ENCODE measurements at regions of chr3 and their contacts with region 1.

Region 1: GRCh38 chr3:78645628-78646310 is 1122.0 kb downstream of the ROBO1 start:
- DNase-seq: peak; percentile 84
- H3K4me3 ChIP-seq: no peak overlapping the region
- H3K27ac ChIP-seq: no peak overlapping the region
- H3K4me1 ChIP-seq: peaks cover 31% of the 10 kb centered on the region
- H3K27me3 ChIP-seq: no peaks in the 10 kb centered on the region
- CTCF ChIP-seq: peak; percentile 54 to 61
- POLR2A ChIP-seq: no peak

Region 2: GRCh38 chr3:77254967-77255831 is 1390.6 kb before region 1 on chr3:
- CTCF ChIA-PET with region 1: interaction called, 3 read pairs
- POLR2A ChIA-PET with region 1: no interaction called
- dilution Hi-C with region 1: no loop called
- intact Hi-C with region 1: loop called (anchors 5 kb)
- DNase-seq: peak; percentile 26
- H3K4me3 ChIP-seq: no peak overlapping the region
- H3K27ac ChIP-seq: no peak overlapping the region
- H3K4me1 ChIP-seq: no peaks in the 10 kb centered on the region
- H3K27me3 ChIP-seq: no peaks in the 10 kb centered on the region
- CTCF ChIP-seq: peak; percentile 44 to 47
- POLR2A ChIP-seq: no peak

Region 3: GRCh38 chr3:77348231-77348855 is 1297.4 kb before region 1 on chr3:
- CTCF ChIA-PET with region 1: interaction called, 89 read pairs
- POLR2A ChIA-PET with region 1: no interaction called
- dilution Hi-C with region 1: no loop called
- intact Hi-C with region 1: loop called (anchors 1 kb)
- DNase-seq: peak; percentile 9
- H3K4me3 ChIP-seq: no peak overlapping the region
- H3K27ac ChIP-seq: no peak overlapping the region
- H3K4me1 ChIP-seq: no peaks in the 10 kb centered on the region
- H3K27me3 ChIP-seq: no peaks in the 10 kb centered on the region
- CTCF ChIP-seq: peak; percentile 25 to 27
- POLR2A ChIP-seq: no peak

Region 4: DNA sequence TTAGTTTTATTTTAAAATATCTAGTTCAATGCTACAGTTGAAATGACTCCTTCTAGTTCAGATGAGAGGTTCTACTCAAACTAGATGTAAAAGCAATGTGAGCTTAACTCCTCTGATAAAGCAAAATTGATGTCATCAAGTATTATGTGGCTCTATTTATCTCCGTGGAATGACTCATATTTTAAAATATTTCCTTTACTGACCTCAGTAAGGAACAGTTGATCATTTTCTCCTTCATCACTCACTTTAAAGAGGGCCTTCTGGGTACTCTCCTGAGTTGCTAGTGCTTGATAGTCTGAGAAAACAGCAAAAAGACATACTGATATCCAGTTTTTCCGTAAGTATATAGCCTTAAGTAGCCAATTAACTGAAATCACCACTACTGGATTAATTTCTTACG is 506.6 kb before region 1 on chr3:
- CTCF ChIA-PET with region 1: interaction called, 14 read pairs
- POLR2A ChIA-PET with region 1: no interaction called
- dilution Hi-C with region 1: no loop called
- intact Hi-C with region 1: loop called (anchors 2 kb)
- DNase-seq: peak; percentile 71
- H3K4me3 ChIP-seq: no peak overlapping the region
- H3K27ac ChIP-seq: peak overlapping the region; percentile 67
- H3K4me1 ChIP-seq: peaks cover 53% of the 10 kb centered on the region
- H3K27me3 ChIP-seq: no peaks in the 10 kb centered on the region
- CTCF ChIP-seq: no peak
- POLR2A ChIP-seq: no peak

Region 5: GRCh38 chr3:78277801-78278200 is 368.0 kb before region 1 on chr3:
- CTCF ChIA-PET with region 1: interaction called, 3 read pairs
- POLR2A ChIA-PET with region 1: no interaction called
- dilution Hi-C with region 1: no loop called
- intact Hi-C with region 1: loop called (anchors 5 kb)
- DNase-seq: no peak
- H3K4me3 ChIP-seq: no peak overlapping the region
- H3K27ac ChIP-seq: no peak overlapping the region
- H3K4me1 ChIP-seq: no peaks in the 10 kb centered on the region
- H3K27me3 ChIP-seq: no peaks in the 10 kb centered on the region
- CTCF ChIP-seq: no peak
- POLR2A ChIP-seq: no peak

Region 6: GRCh38 chr3:78659386-78659987 is 13.7 kb after region 1 on chr3:
- CTCF ChIA-PET with region 1: interaction called, 10 read pairs
- POLR2A ChIA-PET with region 1: no interaction called
- dilution Hi-C with region 1: no loop called
- intact Hi-C with region 1: no loop called
- DNase-seq: peak; percentile 52
- H3K4me3 ChIP-seq: no peak overlapping the region
- H3K27ac ChIP-seq: no peak overlapping the region
- H3K4me1 ChIP-seq: no peaks in the 10 kb centered on the region
- H3K27me3 ChIP-seq: no peaks in the 10 kb centered on the region
- CTCF ChIP-seq: peak; percentile 20 to 29
- POLR2A ChIP-seq: no peak

Region 7: GRCh38 chr3:78765671-78766485 is 120.1 kb after region 1 on chr3:
- CTCF ChIA-PET with region 1: no interaction called
- POLR2A ChIA-PET with region 1: no interaction called
- dilution Hi-C with region 1: no loop called
- intact Hi-C with region 1: no loop called
- DNase-seq: no peak
- H3K4me3 ChIP-seq: no peak overlapping the region
- H3K27ac ChIP-seq: no peak overlapping the region
- H3K4me1 ChIP-seq: no peaks in the 10 kb centered on the region
- H3K27me3 ChIP-seq: no peaks in the 10 kb centered on the region
- CTCF ChIP-seq: no peak
- POLR2A ChIP-seq: no peak

Measured in endothelial cell of umbilical vein (primary cell).